Heart right ventricle (tissue), 16 donors: ENCODE measurements at regions of chr16 and their contacts with region 1.

Region 1: GRCh38 chr16:82497139-82497538 is 129.6 kb upstream of the CDH13 start:
- DNase-seq: no peak
- ATAC-seq: no peak
- H3K4me3 ChIP-seq: no peak overlapping the region
- H3K27ac ChIP-seq: no peak overlapping the region
- H3K4me1 ChIP-seq: no peaks in the 10 kb centered on the region
- H3K27me3 ChIP-seq: peaks cover 0 to 4% (median 0%) of the 10 kb centered on the region in 7 donors
- CTCF ChIP-seq: no peak

Region 2: GRCh38 chr16:82379551-82379950 is 117.6 kb before region 1 on chr16:
- intact Hi-C with region 1: loop called in 1 of 10 experiments (anchors 1 kb)
- DNase-seq: no peak
- ATAC-seq: no peak
- H3K4me3 ChIP-seq: no peak overlapping the region
- H3K27ac ChIP-seq: no peak overlapping the region
- H3K4me1 ChIP-seq: no peaks in the 10 kb centered on the region
- H3K27me3 ChIP-seq: no peaks in the 10 kb centered on the region
- CTCF ChIP-seq: no peak

Region 3: GRCh38 chr16:82524976-82525375 is 27.8 kb after region 1 on chr16:
- intact Hi-C with region 1: no loop called
- DNase-seq: no peak
- ATAC-seq: no peak
- H3K4me3 ChIP-seq: no peak overlapping the region
- H3K27ac ChIP-seq: no peak overlapping the region
- H3K4me1 ChIP-seq: no peaks in the 10 kb centered on the region
- H3K27me3 ChIP-seq: no peaks in the 10 kb centered on the region
- CTCF ChIP-seq: no peak

Region 4: GRCh38 chr16:82560805-82561325 is 63.7 kb after region 1 on chr16:
- intact Hi-C with region 1: no loop called
- DNase-seq: no peak
- ATAC-seq: no peak
- H3K4me3 ChIP-seq: no peak overlapping the region
- H3K27ac ChIP-seq: no peak overlapping the region
- H3K4me1 ChIP-seq: no peaks in the 10 kb centered on the region
- H3K27me3 ChIP-seq: no peaks in the 10 kb centered on the region
- CTCF ChIP-seq: no peak